ENCODE measurements at regions of chrX and their contacts with region 1.

Region 1: DNA sequence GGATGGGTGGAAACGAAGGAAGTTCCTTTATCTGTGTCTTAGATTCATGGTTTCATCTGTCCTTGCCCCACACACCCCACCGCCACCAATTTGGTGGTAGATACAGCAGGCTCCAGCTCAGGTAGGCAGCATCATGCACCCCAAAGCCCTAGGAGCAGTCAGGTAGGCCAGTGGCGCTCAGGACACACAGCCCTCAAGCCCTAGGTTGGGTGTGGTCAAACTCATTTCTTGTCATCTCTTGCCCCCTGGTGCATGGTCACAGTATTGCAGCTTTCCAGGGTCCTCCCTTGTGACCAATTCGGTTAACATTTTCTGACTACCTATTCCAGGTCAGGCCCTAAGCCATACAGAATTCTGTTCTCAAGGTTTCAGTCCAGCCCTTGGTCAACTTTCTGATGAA is 14.5 kb upstream of the PRRG3 start:
- DNase-seq: peak; percentile 45
- ATAC-seq: peak; percentile 87
- H3K4me3 ChIP-seq: no peak overlapping the region
- H3K27ac ChIP-seq: no peak overlapping the region
- H3K4me1 ChIP-seq: no peaks in the 10 kb centered on the region
- H3K27me3 ChIP-seq: no peaks in the 10 kb centered on the region
- CTCF ChIP-seq: peak; percentile 81
- EP300 ChIP-seq: no peak
- POLR2A ChIP-seq: no peak
- RAD21 ChIP-seq: peak; percentile 64

Region 2: DNA sequence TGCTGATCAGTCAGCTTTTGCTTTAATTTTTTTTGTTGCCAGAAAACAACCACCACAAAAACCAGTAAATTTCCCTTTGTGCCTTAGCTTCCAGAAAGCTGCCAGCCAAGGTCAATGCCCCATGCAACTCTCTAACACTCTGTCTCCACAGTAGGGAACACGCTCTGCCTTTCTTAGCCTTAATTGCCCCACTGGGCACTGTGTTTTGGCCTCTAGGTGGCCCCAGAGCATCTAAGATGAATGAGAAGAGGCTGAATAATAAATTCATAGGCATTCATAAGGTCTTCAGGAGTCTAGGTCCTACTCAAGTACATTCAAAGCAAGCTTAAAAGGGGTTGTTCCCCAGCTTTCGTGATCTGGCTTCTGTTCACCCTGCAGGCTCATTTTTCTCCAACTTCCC is 175.0 kb before region 1 on chrX:
- CTCF ChIA-PET with region 1: interaction called, 5 read pairs
- POLR2A ChIA-PET with region 1: no interaction called
- in situ Hi-C with region 1: loop called (anchors 25 kb)
- intact Hi-C with region 1: loop called (anchors 1 kb)
- DNase-seq: peak; percentile 3
- ATAC-seq: peak; percentile 71
- H3K4me3 ChIP-seq: no peak overlapping the region
- H3K27ac ChIP-seq: no peak overlapping the region
- H3K4me1 ChIP-seq: no peaks in the 10 kb centered on the region
- H3K27me3 ChIP-seq: no peaks in the 10 kb centered on the region
- CTCF ChIP-seq: peak; percentile 34; the same call in 1 of the 2 replicates
- EP300 ChIP-seq: no peak
- POLR2A ChIP-seq: no peak
- RAD21 ChIP-seq: no peak

Region 3: GRCh38 chrX:151902813-151903591 is 222.2 kb after region 1 on chrX:
- CTCF ChIA-PET with region 1: no interaction called
- POLR2A ChIA-PET with region 1: no interaction called
- in situ Hi-C with region 1: no loop called
- intact Hi-C with region 1: no loop called
- DNase-seq: peak; percentile 2
- ATAC-seq: no peak; the same call in 2 of the 3 replicates
- H3K4me3 ChIP-seq: no peak overlapping the region
- H3K27ac ChIP-seq: no peak overlapping the region
- H3K4me1 ChIP-seq: no peaks in the 10 kb centered on the region
- H3K27me3 ChIP-seq: no peaks in the 10 kb centered on the region
- CTCF ChIP-seq: no peak
- EP300 ChIP-seq: no peak
- POLR2A ChIP-seq: no peak
- RAD21 ChIP-seq: no peak